Mammary epithelial cell (primary cell): ENCODE measurements at regions of chr4 and their contacts with region 1.

Region 1: GRCh38 chr4:3047464-3048286 is 26.7 kb downstream of the HTT-AS start:
- DNase-seq: peak; percentile 31
- H3K4me3 ChIP-seq: no peak overlapping the region
- H3K27ac ChIP-seq: no peak overlapping the region
- H3K4me1 ChIP-seq: no peaks in the 10 kb centered on the region
- H3K27me3 ChIP-seq: no peaks in the 10 kb centered on the region
- CTCF ChIP-seq: peak; percentile 57 to 82

Region 2: GRCh38 chr4:3136453-3136852 is 88.8 kb after region 1 on chr4:
- CTCF ChIA-PET with region 1: no interaction called
- dilution Hi-C with region 1: no loop called
- in situ Hi-C with region 1: no loop called
- intact Hi-C with region 1: loop called (anchors 5 kb)
- DNase-seq: no peak
- H3K4me3 ChIP-seq: no peak overlapping the region
- H3K27ac ChIP-seq: no peak overlapping the region
- H3K4me1 ChIP-seq: no peaks in the 10 kb centered on the region
- H3K27me3 ChIP-seq: no peaks in the 10 kb centered on the region
- CTCF ChIP-seq: peak; percentile 9 to 26

Region 3: GRCh38 chr4:3340700-3341083 is 293.0 kb after region 1 on chr4:
- CTCF ChIA-PET with region 1: no interaction called
- dilution Hi-C with region 1: no loop called
- in situ Hi-C with region 1: no loop called
- intact Hi-C with region 1: loop called (anchors 1 kb)
- DNase-seq: peak; percentile 7
- H3K4me3 ChIP-seq: no peak overlapping the region
- H3K27ac ChIP-seq: no peak overlapping the region
- H3K4me1 ChIP-seq: no peaks in the 10 kb centered on the region
- H3K27me3 ChIP-seq: no peaks in the 10 kb centered on the region
- CTCF ChIP-seq: peak in 1 of 2 donors; percentile 64